Activated B cell treated with CpG ODN at 0.5 μM for 24 hours (primary cell): ENCODE measurements at regions of chr6 and their contacts with region 1.

Region 1: GRCh38 chr6:157379656-157380454 is 1.1 kb upstream of the ZDHHC14 start:
- DNase-seq: peak; percentile 76
- ATAC-seq: peak; percentile 77
- H3K4me3 Mint-ChIP-seq: peak overlapping the region; percentile 87
- H3K27ac Mint-ChIP-seq: peak overlapping the region; percentile 78
- H3K4me1 Mint-ChIP-seq: peaks cover 40% of the 10 kb centered on the region
- H3K27me3 Mint-ChIP-seq: peaks cover 8% of the 10 kb centered on the region
- CTCF ChIP-seq: no peak

Region 2: GRCh38 chr6:157314705-157315321 is 65.0 kb before region 1 on chr6:
- CTCF ChIA-PET with region 1: interaction called, 9 read pairs
- POLR2A ChIA-PET with region 1: no interaction called
- intact Hi-C with region 1: loop called (anchors 1 kb)
- DNase-seq: no peak
- ATAC-seq: peak; percentile 94
- H3K4me3 Mint-ChIP-seq: no peak overlapping the region
- H3K27ac Mint-ChIP-seq: peak overlapping the region; percentile 8
- H3K4me1 Mint-ChIP-seq: peaks cover 4% of the 10 kb centered on the region
- H3K27me3 Mint-ChIP-seq: no peaks in the 10 kb centered on the region
- CTCF ChIP-seq: peak; percentile 93

Region 3: DNA sequence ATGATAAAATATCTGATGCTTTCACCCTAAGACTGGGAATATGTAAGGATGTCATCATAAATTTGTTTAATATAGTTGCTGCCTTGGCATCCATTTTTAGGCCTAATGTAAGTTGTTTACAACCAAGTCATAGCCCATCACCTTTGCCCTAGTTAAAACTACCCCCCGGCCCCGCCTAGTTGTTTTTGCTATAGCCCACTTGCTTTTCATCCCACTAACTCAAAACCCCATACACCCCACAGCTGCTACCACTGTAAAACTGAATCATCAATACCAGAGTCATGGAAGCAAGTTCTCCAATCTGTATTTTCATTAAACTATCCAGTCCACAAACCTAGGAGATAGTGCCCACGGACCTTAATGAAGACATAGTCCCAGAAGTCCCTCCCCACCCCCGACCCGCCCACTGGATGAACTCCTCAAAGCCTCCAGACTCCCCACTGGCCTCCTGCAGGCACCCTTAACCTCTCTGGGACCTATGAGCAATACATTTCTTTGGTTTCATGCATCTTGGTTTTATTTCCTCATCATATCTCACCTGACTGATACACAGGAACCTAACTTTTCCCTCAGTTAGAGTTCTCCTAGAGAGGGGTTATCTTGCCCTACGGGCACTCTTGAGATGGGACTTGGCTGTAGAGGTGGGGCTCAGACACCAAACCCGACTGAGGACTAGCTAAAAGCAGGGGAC is 11.4 kb before region 1 on chr6:
- CTCF ChIA-PET with region 1: no interaction called
- POLR2A ChIA-PET with region 1: interaction called, 12 read pairs
- intact Hi-C with region 1: loop called (anchors 1 kb)
- DNase-seq: no peak
- ATAC-seq: no peak
- H3K4me3 Mint-ChIP-seq: no peak overlapping the region
- H3K27ac Mint-ChIP-seq: no peak overlapping the region
- H3K4me1 Mint-ChIP-seq: peaks cover 20% of the 10 kb centered on the region
- H3K27me3 Mint-ChIP-seq: peaks cover 31% of the 10 kb centered on the region
- CTCF ChIP-seq: no peak

Region 4: GRCh38 chr6:157563611-157564284 is 183.9 kb after region 1 on chr6:
- CTCF ChIA-PET with region 1: no interaction called
- POLR2A ChIA-PET with region 1: interaction called, 11 read pairs
- intact Hi-C with region 1: loop called (anchors 2 kb)
- DNase-seq: no peak
- ATAC-seq: peak; percentile 69
- H3K4me3 Mint-ChIP-seq: peak overlapping the region; percentile 44
- H3K27ac Mint-ChIP-seq: peak overlapping the region; percentile 80
- H3K4me1 Mint-ChIP-seq: peaks cover 92% of the 10 kb centered on the region
- H3K27me3 Mint-ChIP-seq: no peaks in the 10 kb centered on the region
- CTCF ChIP-seq: no peak

Region 5: GRCh38 chr6:157614026-157614568 is 234.2 kb after region 1 on chr6:
- CTCF ChIA-PET with region 1: no interaction called
- POLR2A ChIA-PET with region 1: interaction called, 14 read pairs
- intact Hi-C with region 1: loop called (anchors 2 kb)
- DNase-seq: no peak
- ATAC-seq: peak; percentile 74
- H3K4me3 Mint-ChIP-seq: peak overlapping the region; percentile 41
- H3K27ac Mint-ChIP-seq: peak overlapping the region; percentile 85
- H3K4me1 Mint-ChIP-seq: peaks cover 67% of the 10 kb centered on the region
- H3K27me3 Mint-ChIP-seq: no peaks in the 10 kb centered on the region
- CTCF ChIP-seq: no peak